Activated CD4-positive, alpha-beta T cell treated with anti-CD3 and anti-CD28 coated beads, Interleukin-2, amount 10 ng/mL, durations not matched to agents 7 days and 5 days (primary cell): ENCODE measurements at regions of chr1 and their contacts with region 1.

Region 1: GRCh38 chr1:20194757-20195461 is 8.6 kb upstream of the PLA2G2C start:
- DNase-seq: peak; percentile 73
- H3K4me3 Mint-ChIP-seq: no peak overlapping the region
- H3K27ac Mint-ChIP-seq: no peak overlapping the region
- H3K4me1 Mint-ChIP-seq: no peaks in the 10 kb centered on the region
- H3K27me3 Mint-ChIP-seq: peaks cover 37% of the 10 kb centered on the region

Region 2: DNA sequence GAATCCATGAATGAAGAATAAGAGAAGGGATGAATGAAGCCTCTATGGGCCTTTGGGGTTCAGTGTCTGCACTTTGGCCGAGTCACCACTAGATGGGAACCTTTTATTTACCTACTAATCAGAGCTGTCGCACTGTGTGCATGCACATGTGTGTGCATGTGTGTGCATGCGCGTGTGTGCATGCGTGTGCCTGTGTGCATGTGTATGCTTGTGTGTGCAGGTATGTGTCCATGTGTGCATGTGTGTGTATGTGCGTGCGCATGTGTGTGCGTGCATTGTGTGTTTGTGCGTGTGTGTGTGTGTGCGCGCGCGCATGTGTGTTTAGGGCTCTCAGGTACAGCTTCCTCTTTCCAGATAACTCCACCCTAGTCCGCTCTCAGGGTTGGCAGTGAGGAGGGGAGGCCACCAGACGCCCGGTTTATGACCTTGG is 29.4 kb before region 1 on chr1:
- CTCF ChIA-PET with region 1: interaction called, 13 read pairs
- POLR2A ChIA-PET with region 1: no interaction called
- DNase-seq: no peak
- H3K4me3 Mint-ChIP-seq: no peak overlapping the region
- H3K27ac Mint-ChIP-seq: no peak overlapping the region
- H3K4me1 Mint-ChIP-seq: no peaks in the 10 kb centered on the region
- H3K27me3 Mint-ChIP-seq: peaks cover 2% of the 10 kb centered on the region

Region 3: GRCh38 chr1:20174937-20175666 is 19.8 kb before region 1 on chr1:
- CTCF ChIA-PET with region 1: interaction called, 14 read pairs
- POLR2A ChIA-PET with region 1: no interaction called
- DNase-seq: no peak
- H3K4me3 Mint-ChIP-seq: no peak overlapping the region
- H3K27ac Mint-ChIP-seq: no peak overlapping the region
- H3K4me1 Mint-ChIP-seq: peaks cover 12% of the 10 kb centered on the region
- H3K27me3 Mint-ChIP-seq: peaks cover 8% of the 10 kb centered on the region